Activated naive CD4-positive, alpha-beta T cell treated with anti-CD3 and anti-CD28 coated beads for 36 hours (primary cell): ENCODE measurements at regions of chr11 and their contacts with region 1.

Region 1: DNA sequence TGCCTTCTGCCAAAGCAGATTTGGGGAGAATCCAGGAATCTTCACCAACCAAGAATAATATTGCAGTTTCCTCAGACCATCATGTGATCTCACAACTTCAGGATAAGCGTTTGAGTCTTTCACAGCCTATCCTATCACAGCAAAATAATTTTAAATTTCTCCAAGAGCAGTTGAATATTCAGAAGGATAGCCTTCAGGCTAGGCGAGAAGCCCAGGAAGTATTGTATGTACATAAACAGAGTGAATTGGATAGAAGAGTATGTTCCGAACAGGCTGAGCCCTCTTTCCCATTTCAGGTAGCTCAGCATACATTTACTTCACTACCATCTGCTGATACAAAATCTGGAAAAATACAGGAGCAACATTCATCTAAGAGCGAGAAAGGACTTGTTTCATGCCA is 36.1 kb downstream of the CEP295 start:
- DNase-seq: no peak
- H3K4me3 Mint-ChIP-seq: no peak overlapping the region
- H3K27ac Mint-ChIP-seq: no peak overlapping the region
- H3K4me1 Mint-ChIP-seq: no peaks in the 10 kb centered on the region
- H3K27me3 Mint-ChIP-seq: no peaks in the 10 kb centered on the region

Region 2: GRCh38 chr11:93543292-93543977 is 154.2 kb before region 1 on chr11 and contains the start of gene SMCO4:
- CTCF ChIA-PET with region 1: no interaction called
- intact Hi-C with region 1: no loop called
- DNase-seq: peak; percentile 84
- H3K4me3 Mint-ChIP-seq: peak within 1 kb of the TSS; percentile 87
- H3K27ac Mint-ChIP-seq: peak within 1 kb of the TSS; percentile 82
- H3K4me1 Mint-ChIP-seq: peaks cover 20% of the 10 kb centered on the region
- H3K27me3 Mint-ChIP-seq: no peaks in the 10 kb centered on the region
- total RNA-seq, gene SMCO4: 23.7 to 26.8 TPM

Region 3: GRCh38 chr11:93712678-93713077 is 15.1 kb after region 1 on chr11:
- CTCF ChIA-PET with region 1: interaction called, 4 read pairs
- intact Hi-C with region 1: loop called (anchors 2 kb)
- DNase-seq: no peak
- H3K4me3 Mint-ChIP-seq: no peak overlapping the region
- H3K27ac Mint-ChIP-seq: no peak overlapping the region
- H3K4me1 Mint-ChIP-seq: peaks cover 13% of the 10 kb centered on the region
- H3K27me3 Mint-ChIP-seq: no peaks in the 10 kb centered on the region

Region 4: GRCh38 chr11:93814966-93815633 is 117.5 kb after region 1 on chr11:
- CTCF ChIA-PET with region 1: no interaction called
- intact Hi-C with region 1: no loop called
- DNase-seq: no peak
- H3K4me3 Mint-ChIP-seq: no peak overlapping the region
- H3K27ac Mint-ChIP-seq: no peak overlapping the region
- H3K4me1 Mint-ChIP-seq: no peaks in the 10 kb centered on the region
- H3K27me3 Mint-ChIP-seq: no peaks in the 10 kb centered on the region